A673 (cell line): ENCODE measurements at regions of chr10 and their contacts with region 1.

Region 1: DNA sequence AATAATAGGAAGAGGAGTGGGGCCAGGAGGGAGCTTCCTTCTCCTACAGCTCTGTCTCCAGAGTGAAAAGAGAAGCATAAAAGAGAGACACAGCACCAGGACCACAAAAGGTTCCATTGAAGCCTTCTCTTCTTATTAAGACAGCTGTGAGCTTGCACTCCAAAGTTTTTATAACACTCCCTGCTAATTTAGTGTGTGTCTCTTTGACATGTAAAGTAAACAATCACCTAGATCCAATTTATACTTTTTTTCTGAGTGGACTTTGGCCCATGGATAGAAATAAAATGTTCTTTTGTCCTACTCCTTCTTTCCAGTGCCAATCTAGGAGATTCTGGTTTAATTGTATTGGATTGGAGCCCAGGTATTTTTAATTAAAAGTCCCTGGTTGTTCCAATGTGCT is at the start of gene CYP2C8:
- DNase-seq: no peak
- H3K4me3 ChIP-seq: no peak within 1 kb of the TSS
- H3K27ac ChIP-seq: no peak within 1 kb of the TSS
- H3K4me1 ChIP-seq: no peaks in the 10 kb centered on the region
- H3K27me3 ChIP-seq: no peaks in the 10 kb centered on the region
- CTCF ChIP-seq: no peak
- total RNA-seq, gene CYP2C8: not detected in 2 replicates

Region 2: GRCh38 chr10:94785211-94785610 is 284.1 kb before region 1 on chr10:
- CTCF ChIA-PET with region 1: no interaction called
- POLR2A ChIA-PET with region 1: no interaction called
- intact Hi-C with region 1: no loop called
- DNase-seq: no peak
- H3K4me3 ChIP-seq: no peak overlapping the region
- H3K27ac ChIP-seq: no peak overlapping the region
- H3K4me1 ChIP-seq: no peaks in the 10 kb centered on the region
- H3K27me3 ChIP-seq: no peaks in the 10 kb centered on the region
- CTCF ChIP-seq: no peak

Region 3: GRCh38 chr10:95035332-95036310 is 33.7 kb before region 1 on chr10:
- CTCF ChIA-PET with region 1: no interaction called
- POLR2A ChIA-PET with region 1: interaction called, 25 read pairs
- intact Hi-C with region 1: no loop called
- DNase-seq: no peak
- H3K4me3 ChIP-seq: no peak overlapping the region
- H3K27ac ChIP-seq: no peak overlapping the region
- H3K4me1 ChIP-seq: no peaks in the 10 kb centered on the region
- H3K27me3 ChIP-seq: no peaks in the 10 kb centered on the region
- CTCF ChIP-seq: no peak

Region 4: DNA sequence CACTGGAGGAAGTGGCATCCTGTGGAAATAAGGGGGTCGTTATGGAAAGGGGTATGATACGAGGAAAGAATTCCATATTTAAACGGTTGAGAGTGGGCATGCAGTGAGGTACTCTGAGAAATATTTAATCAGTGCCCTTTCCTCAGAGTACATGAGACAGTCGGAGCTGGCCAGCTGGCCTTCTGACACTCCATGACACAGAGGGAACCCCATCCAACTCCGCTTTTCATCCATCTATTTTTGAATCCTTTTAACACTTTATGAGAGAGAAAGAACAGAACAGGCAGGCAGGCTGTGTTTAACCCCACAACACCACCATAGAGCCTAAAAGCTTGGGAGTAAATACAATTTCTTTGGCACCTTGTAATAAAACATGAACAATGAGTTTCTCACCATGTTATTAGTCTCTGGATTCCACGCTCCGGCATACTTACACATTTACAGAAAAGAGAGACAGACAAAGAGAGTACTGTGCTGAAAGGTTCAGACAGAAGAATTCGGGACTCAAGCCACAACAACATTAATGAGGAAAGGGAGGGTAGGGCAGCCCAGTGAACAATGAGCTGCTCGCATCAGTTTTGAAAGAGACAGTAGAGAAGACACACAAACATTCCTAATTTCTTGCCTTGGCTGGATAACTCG is 345.7 kb after region 1 on chr10:
- CTCF ChIA-PET with region 1: no interaction called
- POLR2A ChIA-PET with region 1: no interaction called
- intact Hi-C with region 1: no loop called
- DNase-seq: no peak
- H3K4me3 ChIP-seq: no peak overlapping the region
- H3K27ac ChIP-seq: no peak overlapping the region
- H3K4me1 ChIP-seq: no peaks in the 10 kb centered on the region
- H3K27me3 ChIP-seq: no peaks in the 10 kb centered on the region
- CTCF ChIP-seq: no peak